Activated CD4-positive, alpha-beta memory T cell treated with anti-CD3 and anti-CD28 coated beads for 36 hours (primary cell): ENCODE measurements at regions of chr2 and their contacts with region 1.

Region 1: DNA sequence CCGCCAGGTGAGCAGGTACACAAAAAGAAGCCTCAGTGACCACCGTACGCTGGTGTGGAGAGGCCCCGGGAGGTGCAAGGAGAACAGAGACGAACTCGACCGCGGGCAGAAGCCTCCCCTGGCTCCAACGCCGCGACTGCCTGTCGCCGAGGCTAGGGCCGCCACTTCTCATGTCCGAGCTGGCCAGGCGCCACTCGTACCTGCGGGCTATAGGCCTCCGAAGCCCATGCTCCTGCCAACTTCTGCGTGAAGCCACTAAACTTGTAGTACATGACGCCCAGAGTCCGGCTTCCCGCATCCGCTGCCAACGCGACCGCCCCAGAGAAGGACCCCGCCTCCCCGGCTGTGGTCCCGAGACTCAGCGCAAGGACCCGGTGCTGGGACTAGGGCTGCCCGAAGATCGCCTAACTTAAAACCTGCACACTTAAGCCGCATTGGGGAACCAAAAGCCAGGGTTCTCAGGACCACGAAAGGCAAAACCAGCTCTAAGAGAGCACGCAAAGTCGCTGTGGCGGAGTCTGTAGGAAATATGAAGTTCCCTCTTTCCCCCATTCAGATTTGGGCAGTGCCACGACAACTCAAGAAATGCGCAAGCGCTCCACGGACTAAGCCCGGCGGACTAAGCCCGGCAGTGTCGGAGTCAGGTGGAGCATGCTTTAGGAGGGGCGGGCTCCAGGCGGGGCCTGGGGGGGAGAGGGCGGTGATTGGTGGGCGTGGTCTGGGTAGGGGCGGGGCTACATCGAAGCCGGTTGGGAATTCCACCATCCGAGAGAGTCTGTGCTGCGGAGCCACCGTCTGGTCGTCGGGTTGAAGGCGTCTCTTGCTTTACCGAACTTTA is at the start of gene COX7A2L:
- DNase-seq: peak; percentile 98
- H3K4me3 Mint-ChIP-seq: peak within 1 kb of the TSS; percentile 84
- H3K27ac Mint-ChIP-seq: peak within 1 kb of the TSS; percentile 99
- H3K4me1 Mint-ChIP-seq: peaks cover 47% of the 10 kb centered on the region
- H3K27me3 Mint-ChIP-seq: no peaks in the 10 kb centered on the region
- total RNA-seq, gene COX7A2L: 102 to 107 TPM

Region 2: GRCh38 chr2:41698678-41699422 is 662.3 kb before region 1 on chr2:
- CTCF ChIA-PET with region 1: no interaction called
- POLR2A ChIA-PET with region 1: no interaction called
- intact Hi-C with region 1: no loop called
- DNase-seq: peak; percentile 12
- H3K4me3 Mint-ChIP-seq: no peak overlapping the region
- H3K27ac Mint-ChIP-seq: no peak overlapping the region
- H3K4me1 Mint-ChIP-seq: no peaks in the 10 kb centered on the region
- H3K27me3 Mint-ChIP-seq: peaks cover 5% of the 10 kb centered on the region

Region 3: DNA sequence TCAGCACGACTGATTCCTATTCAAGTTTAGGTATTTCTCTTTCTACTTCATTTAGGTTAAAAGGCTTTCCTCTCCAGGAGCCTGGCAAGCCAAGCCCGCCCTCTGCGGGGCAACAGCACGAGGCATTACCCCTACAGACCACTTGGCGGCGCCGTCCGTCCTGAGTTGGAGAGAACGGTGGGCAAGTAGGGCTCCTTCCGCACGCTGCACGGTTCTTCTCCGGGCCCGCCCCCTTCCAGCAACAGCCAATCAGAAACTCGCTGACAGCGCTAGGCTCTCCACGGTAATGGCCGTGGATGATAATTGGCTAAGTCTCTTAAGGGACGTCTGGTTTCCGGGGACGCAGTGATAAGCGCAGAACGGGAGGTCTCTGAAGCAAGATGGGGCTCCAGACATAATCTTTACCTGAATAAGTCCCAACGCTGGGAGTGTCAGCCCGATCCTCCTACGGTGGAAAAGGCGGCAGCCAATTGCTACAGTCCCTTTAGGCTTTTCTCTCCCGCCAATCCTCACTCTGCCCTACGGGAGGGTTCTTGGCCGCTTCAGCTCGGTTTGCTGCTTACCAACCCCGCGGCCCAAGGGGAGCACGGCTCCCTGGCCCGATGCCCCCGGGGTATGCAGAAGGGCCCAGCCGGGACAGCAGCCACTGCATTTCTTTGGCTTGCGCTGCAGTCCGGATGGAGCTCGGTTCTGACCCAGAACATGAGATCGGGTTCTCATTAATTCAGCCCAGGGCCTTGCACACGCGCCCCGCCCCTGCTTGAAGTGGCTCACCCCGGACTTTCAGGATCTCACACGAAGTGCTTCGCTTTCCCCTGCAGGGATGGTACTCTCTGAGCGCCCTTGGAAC is 520.2 kb before region 1 on chr2:
- CTCF ChIA-PET with region 1: no interaction called
- POLR2A ChIA-PET with region 1: no interaction called
- intact Hi-C with region 1: loop called (anchors 1 kb)
- DNase-seq: peak; percentile 99
- H3K4me3 Mint-ChIP-seq: peak overlapping the region; percentile 85
- H3K27ac Mint-ChIP-seq: peak overlapping the region; percentile 81
- H3K4me1 Mint-ChIP-seq: peaks cover 6% of the 10 kb centered on the region
- H3K27me3 Mint-ChIP-seq: peaks cover 8% of the 10 kb centered on the region

Region 4: GRCh38 chr2:42102024-42102590 is 259.0 kb before region 1 on chr2:
- CTCF ChIA-PET with region 1: no interaction called
- POLR2A ChIA-PET with region 1: interaction called, 3 read pairs
- intact Hi-C with region 1: loop called (anchors 1 kb)
- DNase-seq: peak; percentile 91
- H3K4me3 Mint-ChIP-seq: peak overlapping the region; percentile 76
- H3K27ac Mint-ChIP-seq: peak overlapping the region; percentile 87
- H3K4me1 Mint-ChIP-seq: peaks cover 49% of the 10 kb centered on the region
- H3K27me3 Mint-ChIP-seq: no peaks in the 10 kb centered on the region

Region 5: GRCh38 chr2:42238644-42239288 is 122.3 kb before region 1 on chr2:
- CTCF ChIA-PET with region 1: no interaction called
- POLR2A ChIA-PET with region 1: no interaction called
- intact Hi-C with region 1: loop called (anchors 5 kb)
- DNase-seq: peak; percentile 66
- H3K4me3 Mint-ChIP-seq: no peak overlapping the region
- H3K27ac Mint-ChIP-seq: no peak overlapping the region
- H3K4me1 Mint-ChIP-seq: peaks cover 77% of the 10 kb centered on the region
- H3K27me3 Mint-ChIP-seq: no peaks in the 10 kb centered on the region

Region 6: DNA sequence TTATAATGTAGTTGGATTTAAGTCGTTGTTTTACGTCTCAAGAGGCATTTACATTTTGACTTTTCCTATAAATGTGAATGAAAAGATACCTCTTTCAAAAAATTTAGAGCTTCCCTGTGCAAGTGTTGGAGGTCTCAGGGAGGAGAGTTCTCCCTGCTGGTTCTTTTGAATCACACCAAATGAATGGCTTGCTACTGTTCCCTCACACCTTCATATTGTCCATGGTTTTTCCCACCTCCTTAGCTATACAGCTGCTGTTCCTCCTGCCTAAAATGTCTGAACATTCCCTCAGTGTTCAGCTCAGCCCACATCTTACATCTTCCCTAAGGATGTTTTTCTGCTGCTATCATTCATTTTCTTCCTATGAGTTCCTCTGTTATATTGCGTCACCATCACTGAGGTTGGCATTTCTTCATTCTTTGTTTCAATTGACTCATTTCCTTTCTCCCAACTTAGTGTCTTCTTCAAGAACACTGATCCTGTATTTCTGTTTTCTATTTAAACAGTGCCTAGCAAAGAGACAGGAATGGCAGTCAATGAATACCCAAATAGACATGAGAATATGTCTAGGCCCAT is 46.1 kb before region 1 on chr2:
- CTCF ChIA-PET with region 1: no interaction called
- POLR2A ChIA-PET with region 1: no interaction called
- intact Hi-C with region 1: loop called (anchors 5 kb)
- DNase-seq: no peak
- H3K4me3 Mint-ChIP-seq: no peak overlapping the region
- H3K27ac Mint-ChIP-seq: peak overlapping the region; percentile 54
- H3K4me1 Mint-ChIP-seq: peaks cover 29% of the 10 kb centered on the region
- H3K27me3 Mint-ChIP-seq: no peaks in the 10 kb centered on the region

Region 7: GRCh38 chr2:42421601-42422252 is 60.6 kb after region 1 on chr2:
- CTCF ChIA-PET with region 1: no interaction called
- POLR2A ChIA-PET with region 1: interaction called, 3 read pairs
- intact Hi-C with region 1: loop called (anchors 2 kb)
- DNase-seq: no peak
- H3K4me3 Mint-ChIP-seq: no peak overlapping the region
- H3K27ac Mint-ChIP-seq: no peak overlapping the region
- H3K4me1 Mint-ChIP-seq: peaks cover 19% of the 10 kb centered on the region
- H3K27me3 Mint-ChIP-seq: peaks cover 9% of the 10 kb centered on the region

Region 8: GRCh38 chr2:42810121-42810970 is 449.2 kb after region 1 on chr2:
- CTCF ChIA-PET with region 1: no interaction called
- POLR2A ChIA-PET with region 1: interaction called, 3 read pairs
- intact Hi-C with region 1: loop called (anchors 1 kb)
- DNase-seq: peak; percentile 97
- H3K4me3 Mint-ChIP-seq: peak overlapping the region; percentile 95
- H3K27ac Mint-ChIP-seq: peak overlapping the region; percentile 100
- H3K4me1 Mint-ChIP-seq: peaks cover 12% of the 10 kb centered on the region
- H3K27me3 Mint-ChIP-seq: peaks cover 4% of the 10 kb centered on the region